Activated CD4-positive, alpha-beta T cell treated with anti-CD3 and anti-CD28 coated beads for 36 hours (primary cell): ENCODE measurements at regions of chr6 and their contacts with region 1.

Region 1: DNA sequence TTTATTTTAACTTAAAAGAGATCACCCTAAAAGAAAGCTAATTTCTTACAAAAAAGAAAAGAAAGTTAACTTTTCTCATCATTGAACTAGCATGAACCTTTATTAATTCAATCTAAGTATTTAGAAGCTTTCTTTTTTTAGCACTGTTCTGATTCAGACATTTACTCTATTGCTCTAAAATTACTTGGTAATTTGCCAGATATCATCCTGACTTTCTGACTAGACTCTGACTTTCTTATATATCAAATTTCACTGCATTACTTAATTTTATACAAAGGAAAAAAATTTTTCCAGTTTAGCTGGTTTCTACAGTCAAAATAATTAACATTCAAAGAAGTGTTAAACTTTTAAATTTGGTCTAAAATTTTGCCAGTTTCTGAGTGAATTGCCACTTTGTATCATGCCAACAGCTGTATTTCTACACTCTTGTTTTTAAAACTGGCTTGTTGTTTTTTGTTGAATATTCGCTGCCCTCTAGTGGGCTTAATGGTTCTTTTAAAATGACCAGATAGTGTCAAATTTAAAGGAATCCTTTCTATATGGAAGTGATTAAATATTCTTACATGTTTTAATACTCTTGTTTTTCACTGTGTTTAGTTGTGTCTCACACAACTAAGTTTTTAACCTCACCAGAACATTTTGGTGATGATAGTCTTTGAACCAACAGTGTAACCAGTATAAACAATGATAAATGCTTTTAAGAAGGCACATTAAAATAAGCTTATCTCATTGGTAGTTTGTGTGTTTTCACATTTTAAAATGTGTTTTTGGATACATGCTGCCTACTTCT is 102.0 kb downstream of the POPDC3 start:
- DNase-seq: no peak
- ATAC-seq: no peak
- H3K4me3 Mint-ChIP-seq: no peak overlapping the region
- H3K27ac Mint-ChIP-seq: no peak overlapping the region
- H3K4me1 Mint-ChIP-seq: no peaks in the 10 kb centered on the region
- H3K27me3 Mint-ChIP-seq: peaks cover 13% of the 10 kb centered on the region

Region 2: DNA sequence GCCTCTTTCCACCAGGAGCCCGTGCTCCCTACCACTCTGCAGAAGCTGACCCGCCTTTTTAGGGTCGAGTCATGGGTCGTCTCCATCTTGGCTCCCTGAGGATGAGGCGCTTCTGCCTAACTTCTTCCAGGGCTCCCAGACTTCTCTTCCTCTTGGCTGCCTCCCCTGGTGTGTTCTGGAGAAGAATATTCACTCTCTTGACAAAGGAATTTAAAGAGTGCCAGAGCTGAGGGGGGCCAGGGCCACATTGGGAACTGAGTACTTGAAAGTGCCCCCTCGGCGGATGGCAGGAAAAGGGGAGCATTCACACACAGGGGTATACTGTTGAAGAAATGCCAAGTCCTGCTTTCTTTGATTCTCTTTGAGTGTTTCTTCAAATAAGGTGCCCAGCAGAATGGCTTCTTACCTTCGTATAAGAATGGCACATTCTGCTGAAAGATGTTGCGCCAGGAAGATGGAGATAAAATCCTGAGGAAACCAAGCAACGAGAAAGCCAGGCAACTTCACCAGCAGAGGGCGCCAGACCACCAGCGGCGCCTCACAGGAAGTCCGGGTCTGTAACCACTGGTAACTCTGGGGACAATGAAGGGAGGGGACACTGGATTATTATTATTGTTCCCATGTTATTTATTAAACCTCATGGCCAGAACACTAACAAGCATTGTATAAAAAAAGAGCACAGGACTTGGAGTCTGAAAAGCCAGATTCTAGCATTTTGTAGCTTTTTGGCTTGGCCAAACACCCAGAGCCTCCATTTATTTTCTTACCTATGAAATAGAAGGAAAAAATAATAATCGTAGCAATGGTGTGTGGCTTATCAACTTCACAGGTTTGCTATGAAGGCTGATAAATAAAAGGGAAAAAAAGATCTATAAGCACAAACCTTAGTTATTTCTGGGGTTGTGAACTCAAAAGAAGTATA is 394.8 kb before region 1 on chr6:
- CTCF ChIA-PET with region 1: interaction called, 17 read pairs
- POLR2A ChIA-PET with region 1: no interaction called
- intact Hi-C with region 1: loop called in 1 of 2 experiments (anchors 1 kb)
- DNase-seq: peak; percentile 86
- ATAC-seq: peak; percentile 73
- H3K4me3 Mint-ChIP-seq: no peak overlapping the region
- H3K27ac Mint-ChIP-seq: no peak overlapping the region
- H3K4me1 Mint-ChIP-seq: peaks cover 20% of the 10 kb centered on the region
- H3K27me3 Mint-ChIP-seq: no peaks in the 10 kb centered on the region

Region 3: GRCh38 chr6:105097288-105097687 is 19.5 kb after region 1 on chr6:
- CTCF ChIA-PET with region 1: no interaction called
- POLR2A ChIA-PET with region 1: no interaction called
- intact Hi-C with region 1: no loop called
- DNase-seq: no peak
- ATAC-seq: no peak
- H3K4me3 Mint-ChIP-seq: no peak overlapping the region
- H3K27ac Mint-ChIP-seq: no peak overlapping the region
- H3K4me1 Mint-ChIP-seq: no peaks in the 10 kb centered on the region
- H3K27me3 Mint-ChIP-seq: no peaks in the 10 kb centered on the region